ENCODE measurements at regions of chr20 and their contacts with region 1.

Region 1: GRCh38 chr20:53364646-53365045 is 229.0 kb downstream of the ZNF217 start:
- DNase-seq: no peak
- H3K4me3 ChIP-seq: no peak overlapping the region
- H3K27ac ChIP-seq: no peak overlapping the region
- H3K4me1 ChIP-seq: no peaks in the 10 kb centered on the region
- H3K27me3 ChIP-seq: no peaks in the 10 kb centered on the region
- CTCF ChIP-seq: no peak
- EP300 ChIP-seq: no peak
- POLR2A ChIP-seq: no peak

Region 2: GRCh38 chr20:51507216-51508036 is 1857.2 kb before region 1 on chr20:
- in situ Hi-C with region 1: no loop called
- intact Hi-C with region 1: loop called (anchors 5 kb)
- DNase-seq: no peak
- H3K4me3 ChIP-seq: no peak overlapping the region
- H3K27ac ChIP-seq: no peak overlapping the region
- H3K4me1 ChIP-seq: no peaks in the 10 kb centered on the region
- H3K27me3 ChIP-seq: no peaks in the 10 kb centered on the region
- CTCF ChIP-seq: no peak
- EP300 ChIP-seq: no peak
- POLR2A ChIP-seq: no peak

Measured in transverse colon (tissue), 4 donors.